Pancreas (tissue), 10 donors: ENCODE measurements at regions of chr3 and their contacts with region 1.

Region 1: GRCh38 chr3:98329392-98330124 is 24.1 kb upstream of the OR5K4 start:
- DNase-seq: peak in 1 of 6 donors; percentile 45
- ATAC-seq: peak; percentile 49 to 85 (median 80)
- H3K4me3 ChIP-seq: no peak overlapping the region
- H3K27ac ChIP-seq: no peak overlapping the region
- H3K4me1 ChIP-seq: no peaks in the 10 kb centered on the region
- H3K27me3 ChIP-seq: peaks cover 0 to 6% (median 3%) of the 10 kb centered on the region in 4 donors
- CTCF ChIP-seq: peak; percentile 8 to 50 (median 39)

Region 2: DNA sequence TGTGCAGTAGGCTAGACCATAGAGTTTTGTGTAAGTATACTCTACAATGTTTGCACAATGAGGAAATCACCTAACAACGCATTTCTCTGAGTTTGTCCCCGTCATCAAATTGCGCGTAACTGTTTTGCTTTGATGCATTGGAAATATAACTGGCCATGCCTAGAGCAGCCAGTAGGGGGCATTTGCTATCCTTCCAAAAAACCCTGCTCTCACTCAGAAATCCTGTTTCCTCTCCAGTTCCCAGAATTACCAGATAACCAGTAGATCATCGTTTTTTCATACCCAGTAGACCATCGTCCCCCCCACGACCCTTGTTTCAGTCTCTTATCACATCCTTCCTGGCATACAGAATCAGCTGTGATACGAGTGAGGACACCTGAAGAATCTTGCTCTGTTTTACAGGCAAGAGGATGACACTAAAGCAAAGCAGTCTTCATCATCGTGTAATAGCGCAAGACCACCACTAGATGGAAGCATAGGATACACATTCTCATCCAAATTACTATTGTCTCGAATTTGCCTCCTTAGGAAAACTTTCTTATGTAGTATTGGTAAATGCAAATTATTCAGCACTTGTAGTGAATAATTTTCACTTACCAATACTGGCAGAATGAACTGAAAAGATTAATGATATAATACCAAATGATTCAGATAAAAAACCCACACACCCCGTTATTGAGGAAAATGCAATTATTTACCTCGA is 290.1 kb before region 1 on chr3:
- intact Hi-C with region 1: loop called in 2 of 3 experiments (anchors 5 kb)
- DNase-seq: peak in 4 of 6 donors; percentile 19 to 63 (median 32)
- ATAC-seq: peak; percentile 89 to 99 (median 98)
- H3K4me3 ChIP-seq: peak overlapping the region in 1 of 4 donors; percentile 31
- H3K27ac ChIP-seq: no peak overlapping the region
- H3K4me1 ChIP-seq: no peaks in the 10 kb centered on the region
- H3K27me3 ChIP-seq: peaks cover 0 to 8% (median 5%) of the 10 kb centered on the region in 4 donors
- CTCF ChIP-seq: peak; percentile 57 to 85 (median 83)

Region 3: GRCh38 chr3:98801043-98801747 is 471.6 kb after region 1 on chr3:
- intact Hi-C with region 1: no loop called
- DNase-seq: no peak
- ATAC-seq: no peak
- H3K4me3 ChIP-seq: no peak overlapping the region
- H3K27ac ChIP-seq: no peak overlapping the region
- H3K4me1 ChIP-seq: no peaks in the 10 kb centered on the region
- H3K27me3 ChIP-seq: no peaks in the 10 kb centered on the region
- CTCF ChIP-seq: no peak